AG04450 (cell line): ENCODE measurements at regions of chr5 and their contacts with region 1.

Region 1: GRCh38 chr5:178859625-178860531 is at the start of gene ZNF354B:
- DNase-seq: peak; percentile 83
- H3K4me3 ChIP-seq: peak within 1 kb of the TSS; percentile 71
- H3K27ac ChIP-seq: peak within 1 kb of the TSS; percentile 21
- H3K27me3 ChIP-seq: no peaks in the 10 kb centered on the region
- CTCF ChIP-seq: peak; percentile 18; the same call in 1 of the 2 replicates
- polyA plus RNA-seq, gene ZNF354B: 5.3 and 7.4 TPM in 2 replicates

Region 2: GRCh38 chr5:178732281-178732680 is 127.6 kb before region 1 on chr5:
- CTCF ChIA-PET with region 1: interaction called, 7 read pairs
- POLR2A ChIA-PET with region 1: interaction called, 10 read pairs
- DNase-seq: no peak
- H3K4me3 ChIP-seq: no peak overlapping the region
- H3K27ac ChIP-seq: no peak overlapping the region
- H3K27me3 ChIP-seq: no peaks in the 10 kb centered on the region
- CTCF ChIP-seq: no peak

Region 3: GRCh38 chr5:179060116-179061008 is 200.5 kb after region 1 on chr5 and contains the start of gene ZNF354C:
- CTCF ChIA-PET with region 1: no interaction called
- POLR2A ChIA-PET with region 1: interaction called, 14 read pairs
- DNase-seq: peak; percentile 74
- H3K4me3 ChIP-seq: peak within 1 kb of the TSS; percentile 76
- H3K27ac ChIP-seq: peak within 1 kb of the TSS; percentile 39
- H3K27me3 ChIP-seq: no peaks in the 10 kb centered on the region
- CTCF ChIP-seq: no peak
- polyA plus RNA-seq, gene ZNF354C: 4.2 and 5.1 TPM in 2 replicates